Naive thymus-derived CD4-positive, alpha-beta T cell (primary cell): ENCODE measurements at regions of chr15 and their contacts with region 1.

Region 1: DNA sequence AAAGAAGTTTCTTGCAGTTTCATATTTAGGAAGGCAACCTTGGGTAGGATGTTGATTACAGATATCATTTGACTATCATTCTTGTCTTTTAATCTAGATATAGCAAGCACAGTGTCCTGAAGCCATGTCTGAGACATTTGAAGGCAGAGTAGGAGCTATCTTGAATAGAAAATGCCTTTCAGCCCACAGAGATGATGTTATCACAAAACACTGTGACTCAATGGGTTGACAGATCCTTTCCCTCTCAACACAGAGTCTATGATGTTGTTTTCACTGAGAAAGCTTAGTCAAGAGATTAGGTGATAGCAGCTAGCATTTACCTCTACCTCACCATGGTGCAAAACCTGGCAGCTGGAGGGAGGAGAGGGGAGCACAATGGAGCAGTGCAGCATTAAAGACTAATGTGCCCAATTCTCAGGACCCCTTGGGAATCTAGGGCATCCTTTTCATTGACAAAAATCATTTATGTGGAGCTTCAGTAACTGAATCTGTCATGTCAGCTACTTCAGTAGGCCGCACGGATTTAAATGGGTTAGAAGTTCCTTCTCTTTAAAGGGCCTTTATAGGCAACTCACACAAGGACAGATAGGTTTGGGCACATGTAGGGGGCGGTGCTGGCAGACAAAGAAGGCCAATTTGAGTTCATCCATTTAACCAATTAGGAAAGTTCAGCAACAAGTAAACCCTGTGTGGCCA is 121.8 kb downstream of the AGBL1 start:
- DNase-seq: no peak
- ATAC-seq: no peak
- H3K4me3 ChIP-seq: no peak overlapping the region
- H3K4me3 Mint-ChIP-seq: no peak overlapping the region
- H3K27ac ChIP-seq: no peak overlapping the region
- H3K27ac Mint-ChIP-seq: no peak overlapping the region
- H3K4me1 ChIP-seq: no peaks in the 10 kb centered on the region
- H3K4me1 Mint-ChIP-seq: no peaks in the 10 kb centered on the region
- H3K27me3 ChIP-seq: no peaks in the 10 kb centered on the region
- H3K27me3 Mint-ChIP-seq: peaks cover 0 to 13% (median 5%) of the 10 kb centered on the region in 5 donors

Region 2: DNA sequence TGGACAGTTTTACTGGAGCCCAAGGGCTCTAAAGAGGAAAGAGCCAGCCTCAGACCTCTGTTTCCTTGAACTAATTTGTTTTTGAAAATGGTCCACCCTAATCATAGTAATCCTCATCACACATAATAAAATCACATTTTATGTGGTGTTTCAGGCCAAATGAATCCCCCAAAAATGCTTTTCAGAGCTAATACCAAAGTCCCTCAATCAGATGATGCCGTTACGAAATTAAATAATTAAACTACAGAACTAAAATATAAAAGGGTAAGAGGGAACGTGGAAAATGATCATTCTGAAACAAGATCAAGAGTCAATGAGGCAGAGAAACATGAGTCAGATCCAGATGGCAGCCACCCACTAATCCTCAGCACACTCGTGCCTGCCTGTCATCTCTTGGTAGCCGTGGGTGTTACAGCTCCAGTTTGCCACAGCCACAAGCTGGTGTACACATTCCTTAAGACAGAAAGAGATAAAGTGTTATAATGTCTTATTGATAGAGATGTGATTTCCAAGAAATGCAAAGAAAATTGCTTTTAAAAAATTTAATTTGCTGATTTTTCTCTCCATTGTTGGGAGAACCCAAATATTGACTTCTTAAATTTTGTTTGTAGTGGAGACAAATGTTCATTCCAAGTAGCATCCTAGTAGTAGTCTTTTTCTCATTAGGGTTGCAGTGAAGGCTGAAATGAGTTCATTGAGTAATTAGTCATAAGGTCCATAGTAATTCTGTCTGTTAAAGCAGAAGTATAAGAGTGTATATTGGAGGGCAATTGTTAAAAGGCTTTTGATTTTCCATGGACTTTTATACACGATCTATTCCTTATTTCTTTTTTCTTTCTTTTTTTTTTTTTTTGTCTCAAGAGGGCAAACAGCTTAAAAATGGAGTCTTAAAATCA is 17.6 kb before region 1 on chr15:
- CTCF ChIA-PET with region 1: no interaction called
- POLR2A ChIA-PET with region 1: no interaction called
- intact Hi-C with region 1: loop called in 1 of 2 experiments (anchors 1 kb)
- DNase-seq: peak in 1 of 9 donors; percentile 23
- ATAC-seq: no peak
- H3K4me3 ChIP-seq: no peak overlapping the region
- H3K4me3 Mint-ChIP-seq: no peak overlapping the region
- H3K27ac ChIP-seq: no peak overlapping the region
- H3K27ac Mint-ChIP-seq: no peak overlapping the region
- H3K4me1 ChIP-seq: no peaks in the 10 kb centered on the region
- H3K4me1 Mint-ChIP-seq: no peaks in the 10 kb centered on the region
- H3K27me3 ChIP-seq: no peaks in the 10 kb centered on the region
- H3K27me3 Mint-ChIP-seq: peaks cover 8 to 46% (median 27%) of the 10 kb centered on the region in 5 donors